ENCODE measurements at regions of chr6 and their contacts with region 1.

Region 1: DNA sequence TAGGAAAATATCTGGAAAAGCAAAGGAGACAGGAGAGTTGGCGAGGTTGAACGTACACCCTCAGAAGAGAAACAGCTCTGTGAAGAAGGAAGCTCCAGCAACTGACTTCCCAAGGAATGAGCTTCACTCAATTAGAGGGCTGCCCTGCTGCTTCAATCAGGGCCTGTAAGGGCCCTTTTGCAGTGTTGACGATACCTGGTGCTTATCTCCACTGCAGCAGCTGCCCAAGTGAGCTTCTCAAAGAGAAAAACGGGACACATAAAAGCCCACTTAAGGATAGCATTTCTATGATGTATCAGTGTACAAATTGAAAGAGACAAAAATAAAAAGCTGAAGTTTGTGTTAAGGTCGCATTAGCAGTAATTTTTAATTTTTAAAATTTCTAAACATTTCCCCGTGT is 16.4 kb downstream of the SEC63 start:
- DNase-seq: peak in 1 of 3 donors; percentile 24
- H3K4me3 ChIP-seq: no peak overlapping the region
- H3K27ac ChIP-seq: no peak overlapping the region
- H3K4me1 ChIP-seq: peaks cover 0 to 2% (median 0%) of the 10 kb centered on the region in 4 experiments
- H3K27me3 ChIP-seq: no peaks in the 10 kb centered on the region

Region 2: DNA sequence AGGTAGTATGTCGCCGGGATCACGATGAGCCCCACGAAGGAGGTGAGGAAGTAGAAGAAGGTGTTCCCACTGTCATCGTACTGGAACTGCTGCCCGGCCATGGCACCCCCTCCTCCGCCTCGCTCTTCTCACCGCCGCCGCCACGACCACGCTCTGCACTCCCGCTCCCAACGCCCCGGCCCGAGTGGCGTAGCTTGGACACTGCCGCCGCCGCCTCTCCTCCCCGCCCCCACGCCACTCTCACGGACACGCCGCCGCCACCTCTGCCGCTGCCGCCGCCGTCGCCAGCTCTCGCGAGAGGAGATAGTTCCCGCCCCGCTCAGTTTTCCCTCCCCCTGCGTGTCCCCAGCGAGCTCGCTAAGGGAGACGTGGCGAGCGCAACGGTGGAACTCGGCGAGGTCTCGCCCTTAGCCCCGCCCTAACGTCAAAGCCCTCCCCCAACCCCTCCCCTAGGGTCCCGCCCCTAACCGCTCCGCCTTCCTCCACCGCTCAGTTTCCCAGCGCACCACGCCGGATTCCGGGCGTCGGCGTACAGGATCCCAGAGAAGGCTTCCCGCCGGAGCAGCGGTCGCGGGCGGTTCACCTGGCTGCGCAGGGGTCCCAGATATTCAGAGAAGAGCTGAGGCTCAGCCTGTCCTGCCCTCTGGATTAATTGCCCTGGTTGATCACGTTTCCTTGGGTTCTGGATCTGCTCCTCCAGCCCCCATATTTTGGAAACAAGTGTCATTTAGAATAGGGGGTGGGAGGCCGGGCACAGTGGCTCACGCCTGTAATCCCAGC is 16.5 kb after region 1 on chr6 and contains the start of gene SEC63:
- CTCF ChIA-PET with region 1: interaction called, 4 read pairs
- POLR2A ChIA-PET with region 1: interaction called, 10 read pairs
- DNase-seq: peak; percentile 95 to 97 (median 97)
- H3K4me3 ChIP-seq: peak within 1 kb of the TSS; percentile 89 to 99 (median 94)
- H3K27ac ChIP-seq: peak within 1 kb of the TSS; percentile 86 to 87
- H3K4me1 ChIP-seq: peaks cover 11 to 32% (median 16%) of the 10 kb centered on the region in 4 experiments
- H3K27me3 ChIP-seq: peaks cover 0 to 4% (median 0%) of the 10 kb centered on the region in 5 experiments